ENCODE measurements at regions of chr20 and their contacts with region 1.

Region 1: GRCh38 chr20:32779500-32780211 is 17.5 kb downstream of the DNMT3B start:
- DNase-seq: no peak
- ATAC-seq: no peak
- H3K4me3 ChIP-seq: no peak overlapping the region
- H3K27ac ChIP-seq: no peak overlapping the region
- H3K4me1 ChIP-seq: no peaks in the 10 kb centered on the region
- H3K27me3 ChIP-seq: no peaks in the 10 kb centered on the region
- CTCF ChIP-seq: no peak

Region 2: GRCh38 chr20:32674362-32674789 is 105.3 kb before region 1 on chr20:
- intact Hi-C with region 1: loop called (anchors 2 kb)
- DNase-seq: no peak
- ATAC-seq: peak in 1 of 4 donors; percentile 70
- H3K4me3 ChIP-seq: no peak overlapping the region
- H3K27ac ChIP-seq: no peak overlapping the region
- H3K4me1 ChIP-seq: no peaks in the 10 kb centered on the region
- H3K27me3 ChIP-seq: no peaks in the 10 kb centered on the region
- CTCF ChIP-seq: peak; percentile 61